ENCODE measurements at regions of chr15 and their contacts with region 1.

Region 1: GRCh38 chr15:74631408-74632247 is 16.0 kb downstream of the CLK3 start:
- DNase-seq: no peak
- H3K4me3 ChIP-seq: no peak overlapping the region
- H3K27ac ChIP-seq: no peak overlapping the region
- H3K4me1 ChIP-seq: no peaks in the 10 kb centered on the region
- H3K27me3 ChIP-seq: no peaks in the 10 kb centered on the region
- CTCF ChIP-seq: peak; percentile 40 to 65 (median 43)
- POLR2A ChIP-seq: no peak

Region 2: GRCh38 chr15:74768771-74769342 is 137.2 kb after region 1 on chr15:
- intact Hi-C with region 1: loop called (anchors 5 kb)
- DNase-seq: no peak
- H3K4me3 ChIP-seq: no peak overlapping the region
- H3K27ac ChIP-seq: no peak overlapping the region
- H3K4me1 ChIP-seq: peaks cover 31% of the 10 kb centered on the region
- H3K27me3 ChIP-seq: no peaks in the 10 kb centered on the region
- CTCF ChIP-seq: peak; percentile 73 to 87 (median 84)
- POLR2A ChIP-seq: no peak

Region 3: DNA sequence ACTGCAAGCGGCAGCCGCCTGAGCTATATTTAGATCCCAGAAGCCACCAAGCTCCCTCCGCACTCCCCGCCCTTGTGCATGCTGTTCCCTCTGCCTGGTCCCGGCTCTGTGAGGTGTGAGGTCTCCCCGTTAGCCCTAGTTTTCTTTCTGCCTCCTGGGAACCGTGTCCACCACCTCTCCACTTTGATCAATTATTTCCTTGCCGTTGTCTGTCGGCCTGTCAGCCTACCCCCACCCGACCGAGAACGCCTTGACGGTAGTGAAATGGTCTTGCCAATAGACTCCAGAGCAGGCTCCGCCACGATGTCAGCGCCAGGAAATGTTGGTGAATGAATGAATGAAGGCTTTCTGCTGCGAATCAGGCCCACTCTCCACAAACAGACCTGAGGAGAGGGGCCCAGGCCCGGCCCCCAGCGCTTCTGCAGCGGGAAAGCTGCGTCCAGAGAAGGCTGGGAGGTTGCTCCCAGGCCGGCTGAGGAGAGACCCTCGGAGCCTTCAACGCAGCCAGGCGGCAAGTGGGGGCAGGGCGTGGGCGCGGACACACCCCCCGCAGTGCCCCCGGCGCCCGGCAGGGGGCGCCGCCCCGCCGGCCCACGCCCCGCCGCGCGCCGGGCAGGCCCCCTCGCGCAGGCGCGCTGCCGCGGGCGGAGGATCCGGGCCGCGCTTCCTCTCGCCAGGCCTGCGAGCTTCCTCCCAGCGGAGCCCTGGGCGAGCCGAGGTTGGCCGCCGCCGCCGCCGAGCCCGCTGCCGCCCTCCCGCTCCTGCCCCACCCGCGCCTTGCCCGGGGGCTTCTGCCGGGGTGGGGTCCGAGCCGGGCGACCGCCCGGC is 150.0 kb after region 1 on chr15 and contains the start of gene CSK:
- intact Hi-C with region 1: no loop called
- DNase-seq: no peak
- H3K4me3 ChIP-seq: peak within 1 kb of the TSS; percentile 76 to 93
- H3K27ac ChIP-seq: peak within 1 kb of the TSS; percentile 79
- H3K4me1 ChIP-seq: peaks cover 71% of the 10 kb centered on the region
- H3K27me3 ChIP-seq: no peaks in the 10 kb centered on the region
- CTCF ChIP-seq: peak in 2 of 3 experiments; percentile 32 to 41
- POLR2A ChIP-seq: peak in 1 of 2 donors; percentile 43
- total RNA-seq, gene CSK: 26.3 TPM

Region 4: GRCh38 chr15:74793135-74794028 is 161.8 kb after region 1 on chr15:
- intact Hi-C with region 1: no loop called
- DNase-seq: no peak
- H3K4me3 ChIP-seq: no peak overlapping the region
- H3K27ac ChIP-seq: peak overlapping the region; percentile 51
- H3K4me1 ChIP-seq: peaks cover 74% of the 10 kb centered on the region
- H3K27me3 ChIP-seq: no peaks in the 10 kb centered on the region
- CTCF ChIP-seq: no peak
- POLR2A ChIP-seq: no peak

Measured in vagina (tissue), 2 donors.